ENCODE measurements at regions of chr3 and their contacts with region 1.

Region 1: GRCh38 chr3:35383719-35384555 is 255.4 kb upstream of the ARPP21 start:
- DNase-seq: no peak
- H3K4me3 ChIP-seq: no peak overlapping the region
- CTCF ChIP-seq: no peak
- POLR2A ChIP-seq: no peak

Region 2: DNA sequence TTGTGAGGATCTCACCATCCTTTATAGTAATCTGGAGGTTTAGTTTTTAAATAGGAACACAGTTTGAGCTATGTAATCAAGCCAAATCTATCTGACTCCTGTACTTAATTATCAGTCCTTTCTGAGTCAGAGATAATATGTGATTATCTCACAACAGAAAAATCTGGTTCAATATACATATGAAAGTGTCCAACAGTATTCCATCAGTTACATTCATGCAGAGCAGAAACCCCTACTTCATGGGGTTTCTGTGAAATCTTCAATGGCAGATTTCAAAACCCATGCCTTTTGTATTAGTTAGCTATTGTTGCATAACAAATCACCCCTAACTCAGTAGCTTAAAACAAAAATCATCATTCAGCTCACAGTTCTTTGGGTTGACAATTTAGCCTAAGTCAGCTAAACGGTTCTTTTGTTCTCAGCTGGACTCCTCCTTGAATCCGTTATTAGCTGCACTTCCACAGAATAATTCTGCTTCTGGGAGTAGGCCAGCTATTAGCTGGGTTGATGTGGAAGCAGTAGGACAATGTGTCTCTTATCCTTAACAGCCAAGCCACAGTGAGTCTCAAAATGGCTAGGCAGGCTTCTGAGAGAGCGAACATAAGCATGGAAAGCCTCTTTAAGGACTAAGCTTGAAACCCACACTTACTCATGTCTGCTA is 212.5 kb after region 1 on chr3:
- intact Hi-C with region 1: loop called (anchors 5 kb)
- DNase-seq: no peak
- H3K4me3 ChIP-seq: no peak overlapping the region
- CTCF ChIP-seq: no peak
- POLR2A ChIP-seq: no peak

Measured in lower leg skin (tissue), 4 donors.